CD4-positive, alpha-beta T cell (primary cell): ENCODE measurements at regions of chr2 and their contacts with region 1.

Region 1: DNA sequence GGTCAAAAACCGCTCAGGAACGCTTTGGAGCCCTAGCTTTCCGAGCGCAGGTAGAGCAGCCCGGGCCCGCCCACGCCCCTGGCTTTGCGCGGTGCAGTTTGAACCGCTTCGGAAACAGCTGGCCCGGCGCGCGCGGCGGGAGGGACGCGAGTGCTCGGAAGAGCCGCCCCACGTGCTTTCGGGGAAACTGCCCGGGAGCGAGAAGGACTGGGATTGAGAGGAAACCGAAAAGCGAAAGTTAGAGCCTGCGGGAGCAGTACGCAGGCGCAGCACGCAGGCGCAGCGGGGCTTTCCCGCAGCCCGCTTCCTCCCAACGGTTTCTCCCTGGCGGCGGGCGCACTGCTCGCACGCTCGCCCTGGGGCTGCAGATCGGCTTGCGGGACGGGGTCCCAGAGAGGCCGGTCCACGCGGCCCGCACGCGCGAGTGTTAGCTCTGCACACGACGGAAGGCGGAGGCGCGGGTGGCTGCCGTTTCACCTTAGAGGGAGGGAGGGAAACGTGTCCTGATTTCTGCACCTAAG is 6.3 kb upstream of the STAT1 start:
- DNase-seq: peak; percentile 84 to 98 (median 92)
- ATAC-seq: peak; percentile 73
- H3K4me3 ChIP-seq: peak overlapping the region; percentile 82
- H3K4me3 Mint-ChIP-seq: no peak overlapping the region
- H3K27ac ChIP-seq: peak overlapping the region; percentile 84 to 87
- H3K27ac Mint-ChIP-seq: no peak overlapping the region
- H3K4me1 ChIP-seq: peaks cover 54% of the 10 kb centered on the region
- H3K4me1 Mint-ChIP-seq: peaks cover 32% of the 10 kb centered on the region
- H3K27me3 ChIP-seq: no peaks in the 10 kb centered on the region
- H3K27me3 Mint-ChIP-seq: no peaks in the 10 kb centered on the region
- CTCF ChIP-seq: no peak

Region 2: DNA sequence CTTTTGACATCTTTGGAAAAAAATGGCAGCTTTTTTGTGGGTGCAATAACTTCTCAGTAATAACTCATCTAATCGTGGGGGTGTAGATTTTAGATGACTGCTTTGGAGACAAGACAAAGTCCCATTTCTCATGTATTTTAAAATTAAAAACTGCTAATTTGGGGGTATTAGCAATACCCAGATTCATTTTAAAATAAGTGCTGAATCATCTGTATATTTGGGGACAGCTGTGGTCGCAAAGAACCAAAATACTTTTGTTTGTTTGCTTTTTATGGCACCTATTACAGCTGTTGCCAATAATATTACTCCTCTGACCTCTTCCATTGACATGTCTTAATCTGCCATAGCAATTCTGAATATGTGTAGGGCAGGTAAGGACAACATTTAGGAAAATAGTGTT is 51.8 kb before region 1 on chr2:
- CTCF ChIA-PET with region 1: no interaction called
- POLR2A ChIA-PET with region 1: interaction called, 14 read pairs
- intact Hi-C with region 1: no loop called
- DNase-seq: no peak
- ATAC-seq: no peak
- H3K4me3 ChIP-seq: no peak overlapping the region
- H3K4me3 Mint-ChIP-seq: no peak overlapping the region
- H3K27ac ChIP-seq: no peak overlapping the region
- H3K27ac Mint-ChIP-seq: peak overlapping the region; percentile 58
- H3K4me1 ChIP-seq: peaks cover 5% of the 10 kb centered on the region
- H3K4me1 Mint-ChIP-seq: peaks cover 44% of the 10 kb centered on the region
- H3K27me3 ChIP-seq: no peaks in the 10 kb centered on the region
- H3K27me3 Mint-ChIP-seq: no peaks in the 10 kb centered on the region
- CTCF ChIP-seq: no peak

Region 3: GRCh38 chr2:190979906-190980629 is 40.2 kb before region 1 on chr2:
- CTCF ChIA-PET with region 1: interaction called, 3 read pairs
- POLR2A ChIA-PET with region 1: interaction called, 11 read pairs
- intact Hi-C with region 1: no loop called
- DNase-seq: no peak
- ATAC-seq: no peak
- H3K4me3 ChIP-seq: no peak overlapping the region
- H3K4me3 Mint-ChIP-seq: peak overlapping the region; percentile 18
- H3K27ac ChIP-seq: peak overlapping the region; percentile 17 to 43
- H3K27ac Mint-ChIP-seq: peak overlapping the region; percentile 87
- H3K4me1 ChIP-seq: peaks cover 11% of the 10 kb centered on the region
- H3K4me1 Mint-ChIP-seq: peaks cover 49% of the 10 kb centered on the region
- H3K27me3 ChIP-seq: no peaks in the 10 kb centered on the region
- H3K27me3 Mint-ChIP-seq: no peaks in the 10 kb centered on the region
- CTCF ChIP-seq: no peak